KBM-7 (cell line): ENCODE measurements at regions of chr12 and their contacts with region 1.

Region 1: GRCh38 chr12:25436203-25437030 is 116.7 kb downstream of the LMNTD1 start:
- DNase-seq: peak; percentile 64

Region 2: GRCh38 chr12:26017484-26018206 is 581.2 kb after region 1 on chr12:
- in situ Hi-C with region 1: loop called (anchors 25 kb)
- DNase-seq: peak; percentile 68